ENCODE measurements at regions of chr6 and their contacts with region 1.

Region 1: DNA sequence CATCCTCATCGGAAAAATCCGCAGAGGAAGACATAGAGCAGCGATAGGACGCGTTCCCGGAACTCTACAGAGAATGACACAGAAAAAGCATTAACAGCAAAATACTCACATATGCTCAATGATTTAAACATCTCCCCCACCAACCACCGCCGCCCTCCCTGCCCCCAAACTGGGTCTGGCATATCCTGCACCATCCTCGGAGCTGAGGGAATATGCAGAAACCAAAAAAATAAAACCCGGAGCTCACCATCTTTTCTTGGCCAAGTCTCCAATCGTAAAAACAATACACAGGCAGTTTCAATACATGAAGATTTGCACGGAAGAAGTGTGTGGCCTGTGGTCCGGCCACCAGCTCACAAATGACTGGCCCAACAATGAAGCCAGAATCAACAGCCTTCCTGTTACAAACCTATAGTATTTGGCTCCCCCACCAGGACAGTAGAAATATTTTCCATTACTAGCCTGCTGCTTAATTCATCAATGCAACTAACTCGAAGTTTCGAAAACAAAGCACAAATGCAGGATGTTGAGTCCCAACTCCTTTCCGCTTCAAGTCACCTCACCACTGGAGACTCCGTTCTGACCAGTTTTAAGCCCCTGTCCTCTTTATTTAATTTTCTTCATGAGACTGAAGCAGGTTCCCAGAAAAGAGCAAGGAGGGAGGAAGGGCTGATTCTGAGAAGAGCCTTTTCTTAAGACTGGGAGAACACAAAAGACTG is 103.2 kb upstream of the BEND6 start:
- DNase-seq: peak; percentile 61
- H3K4me3 ChIP-seq: peak overlapping the region; percentile 36
- H3K27ac ChIP-seq: no peak overlapping the region
- H3K4me1 ChIP-seq: peaks cover 4% of the 10 kb centered on the region
- CTCF ChIP-seq: peak; percentile 86

Region 2: GRCh38 chr6:56637640-56638039 is 214.1 kb before region 1 on chr6:
- CTCF ChIA-PET with region 1: no interaction called
- POLR2A ChIA-PET with region 1: no interaction called
- intact Hi-C with region 1: loop called (anchors 10 kb)
- DNase-seq: peak; percentile 24
- H3K4me3 ChIP-seq: no peak overlapping the region
- H3K27ac ChIP-seq: no peak overlapping the region
- H3K4me1 ChIP-seq: no peaks in the 10 kb centered on the region
- CTCF ChIP-seq: peak; percentile 70

Region 3: GRCh38 chr6:56708810-56709597 is 142.7 kb before region 1 on chr6:
- CTCF ChIA-PET with region 1: interaction called, 3 read pairs
- POLR2A ChIA-PET with region 1: no interaction called
- intact Hi-C with region 1: loop called (anchors 1 kb)
- DNase-seq: peak; percentile 54
- H3K4me3 ChIP-seq: no peak overlapping the region
- H3K27ac ChIP-seq: no peak overlapping the region
- H3K4me1 ChIP-seq: no peaks in the 10 kb centered on the region
- CTCF ChIP-seq: peak; percentile 86

Region 4: GRCh38 chr6:56724455-56724854 is 127.2 kb before region 1 on chr6:
- CTCF ChIA-PET with region 1: no interaction called
- POLR2A ChIA-PET with region 1: no interaction called
- intact Hi-C with region 1: no loop called
- DNase-seq: no peak
- H3K4me3 ChIP-seq: no peak overlapping the region
- H3K27ac ChIP-seq: no peak overlapping the region
- H3K4me1 ChIP-seq: no peaks in the 10 kb centered on the region
- CTCF ChIP-seq: no peak

Region 5: GRCh38 chr6:56864171-56864616 is 12.5 kb after region 1 on chr6:
- CTCF ChIA-PET with region 1: no interaction called
- POLR2A ChIA-PET with region 1: interaction called, 12 read pairs
- intact Hi-C with region 1: no loop called
- DNase-seq: no peak
- H3K4me3 ChIP-seq: no peak overlapping the region
- H3K27ac ChIP-seq: no peak overlapping the region
- H3K4me1 ChIP-seq: no peaks in the 10 kb centered on the region
- CTCF ChIP-seq: no peak

Region 6: DNA sequence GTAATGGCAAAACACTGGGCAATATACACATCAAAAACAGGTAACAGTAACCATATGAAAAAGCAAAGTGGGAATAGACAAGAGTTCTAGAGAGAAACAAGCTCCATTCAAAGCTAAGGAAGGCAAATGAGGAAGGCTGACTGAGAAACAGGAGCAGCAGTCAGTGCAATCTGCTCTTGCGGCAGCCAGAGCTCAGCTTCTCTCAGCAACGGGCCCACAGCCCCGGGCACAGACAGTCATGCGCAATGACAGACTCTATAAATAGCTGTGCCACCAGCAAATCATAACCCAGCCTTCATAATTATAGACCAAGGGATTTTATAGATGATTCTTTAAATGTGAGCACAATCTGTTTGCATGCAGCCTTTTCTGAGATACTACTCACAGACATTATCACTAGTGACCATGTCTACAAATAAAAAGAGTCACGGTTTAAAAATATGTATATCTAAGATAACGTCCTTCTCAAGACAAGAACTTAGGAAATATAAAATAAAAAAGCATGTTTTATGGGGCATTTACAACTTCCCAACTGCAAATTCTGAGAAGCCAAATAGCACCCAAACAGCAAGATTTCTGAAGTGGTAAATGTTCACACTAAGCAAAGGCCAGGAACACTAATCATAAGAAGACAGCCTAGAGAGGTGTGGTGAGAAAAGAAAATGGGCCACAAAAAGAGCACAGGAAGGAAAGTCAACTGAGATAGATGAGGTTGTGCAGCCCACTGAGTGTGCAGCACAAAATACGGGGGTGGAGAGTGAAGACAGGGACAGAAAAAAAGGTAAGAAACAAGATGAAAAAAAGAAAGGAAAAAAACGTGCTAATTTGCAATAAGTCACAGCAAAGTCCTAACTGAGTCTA is 63.3 kb after region 1 on chr6:
- CTCF ChIA-PET with region 1: no interaction called
- POLR2A ChIA-PET with region 1: no interaction called
- intact Hi-C with region 1: no loop called
- DNase-seq: no peak
- H3K4me3 ChIP-seq: no peak overlapping the region
- H3K27ac ChIP-seq: no peak overlapping the region
- H3K4me1 ChIP-seq: no peaks in the 10 kb centered on the region
- CTCF ChIP-seq: no peak

Region 7: DNA sequence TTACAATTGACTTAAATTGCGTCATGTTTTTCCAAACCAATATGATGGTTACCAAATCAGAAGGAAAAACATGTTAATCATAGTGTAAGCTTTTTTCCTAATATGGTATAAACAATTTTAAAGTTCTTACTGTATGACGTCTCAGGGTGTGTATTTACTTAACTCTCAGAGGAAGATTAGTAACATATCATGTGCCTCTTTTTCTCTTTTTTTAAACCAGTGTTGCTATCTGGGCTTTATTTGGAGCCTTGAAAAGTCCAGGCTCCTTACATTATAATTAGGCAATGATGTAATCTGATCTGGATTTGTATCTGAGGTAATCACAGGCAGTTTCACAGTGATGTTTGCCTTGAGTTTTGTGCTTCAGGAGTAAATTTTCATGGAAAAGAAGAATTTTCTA is 390.8 kb after region 1 on chr6:
- CTCF ChIA-PET with region 1: no interaction called
- POLR2A ChIA-PET with region 1: no interaction called
- intact Hi-C with region 1: no loop called
- DNase-seq: no peak
- H3K4me3 ChIP-seq: no peak overlapping the region
- H3K27ac ChIP-seq: no peak overlapping the region
- H3K4me1 ChIP-seq: no peaks in the 10 kb centered on the region
- CTCF ChIP-seq: no peak